Esophagus muscularis mucosa (tissue), 4 donors: ENCODE measurements at regions of chr21 and their contacts with region 1.

Region 1: DNA sequence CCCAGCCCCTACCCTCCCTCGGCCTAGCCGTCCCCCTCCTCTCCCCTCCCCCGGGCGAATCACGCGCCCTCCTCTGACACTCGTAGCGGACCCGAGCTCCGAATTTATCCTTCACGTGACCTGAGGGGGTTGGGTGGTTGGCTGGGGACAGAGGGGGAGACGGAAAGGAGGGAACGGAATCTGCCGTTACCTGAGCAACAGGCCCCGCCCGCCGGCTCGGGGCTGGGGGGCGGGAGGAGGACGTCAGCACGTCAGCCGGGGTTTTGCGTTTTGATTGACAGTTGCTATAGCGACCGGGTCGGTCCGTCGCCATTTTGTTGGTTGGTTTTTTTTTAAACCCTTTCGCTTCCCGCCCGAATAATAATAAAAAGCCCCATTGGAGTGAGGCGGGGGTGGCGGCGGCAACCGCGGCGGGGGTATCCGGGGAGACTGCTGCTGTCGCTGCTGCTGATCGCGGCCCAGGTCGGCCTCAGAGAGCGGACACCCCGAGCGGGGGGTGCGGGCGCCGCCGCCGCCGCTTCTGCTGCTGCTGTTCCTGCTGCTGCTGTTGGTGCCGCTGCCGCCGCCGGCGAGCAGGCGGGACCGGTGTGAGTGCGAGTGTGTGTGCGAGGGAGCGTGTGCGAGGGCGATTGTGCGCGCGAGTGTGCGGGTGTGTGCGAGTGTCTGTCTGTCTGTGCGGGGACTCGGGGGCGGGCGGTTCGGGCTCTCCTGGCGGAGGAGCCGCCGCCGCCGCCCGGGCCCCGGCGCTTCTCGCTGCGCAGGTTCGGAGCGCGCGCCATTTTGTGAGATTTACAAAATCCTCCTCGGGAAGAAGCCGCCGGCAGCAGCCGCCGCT is at the start of gene DYRK1A:
- DNase-seq: peak; percentile 100
- H3K4me3 ChIP-seq: peak within 1 kb of the TSS; percentile 79 to 97 (median 95)
- H3K27ac ChIP-seq: peak within 1 kb of the TSS; percentile 99 to 100 (median 100)
- H3K4me1 ChIP-seq: peaks cover 23 to 46% (median 44%) of the 10 kb centered on the region in 4 donors
- H3K27me3 ChIP-seq: no peaks in the 10 kb centered on the region
- CTCF ChIP-seq: no peak
- EP300 ChIP-seq: no peak
- POLR2A ChIP-seq: peak; percentile 64
- total RNA-seq, gene DYRK1A: 81.8 to 108 (median 87.4) TPM

Region 2: DNA sequence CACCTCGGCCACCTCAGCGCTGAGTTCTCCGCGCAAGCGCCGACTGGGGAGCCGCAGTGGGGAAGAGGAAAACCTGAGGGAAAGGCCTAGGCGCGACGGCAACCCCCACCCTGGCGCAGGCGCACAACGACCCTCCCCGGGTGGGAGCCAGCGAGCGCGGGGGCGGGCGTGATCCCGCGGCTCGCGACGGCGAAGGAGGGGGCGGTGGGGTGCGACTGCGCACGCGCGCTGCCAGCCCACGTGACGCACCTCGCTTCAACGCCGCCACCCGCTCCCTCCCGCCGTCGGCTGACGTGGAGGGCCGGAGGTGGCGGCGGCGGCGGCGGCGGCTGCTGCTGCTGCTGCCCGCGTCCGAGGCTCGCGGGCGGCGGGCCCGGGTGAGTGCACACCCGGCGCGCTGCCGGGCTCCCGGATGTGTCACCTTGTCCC is 293.7 kb before region 1 on chr21 and contains the starts of genes PIGP and TTC3:
- intact Hi-C with region 1: loop called (anchors 10 kb)
- DNase-seq: peak; percentile 96
- H3K4me3 ChIP-seq: peak within 1 kb of the TSS; percentile 75 to 97 (median 76)
- H3K27ac ChIP-seq: peak within 1 kb of the TSS; percentile 92 to 100 (median 100)
- H3K4me1 ChIP-seq: peaks cover 16 to 40% (median 32%) of the 10 kb centered on the region in 4 donors
- H3K27me3 ChIP-seq: no peaks in the 10 kb centered on the region
- CTCF ChIP-seq: peak in 1 of 3 experiments; percentile 3
- EP300 ChIP-seq: no peak
- POLR2A ChIP-seq: peak; percentile 50
- total RNA-seq, gene PIGP: 20.3 to 30.7 (median 21.6) TPM
- total RNA-seq, gene TTC3: 86.0 to 162 (median 104) TPM

Region 3: GRCh38 chr21:37267269-37268184 is 99.2 kb before region 1 on chr21 and contains the start of gene VPS26C:
- intact Hi-C with region 1: loop called (anchors 2 kb)
- DNase-seq: peak; percentile 99
- H3K4me3 ChIP-seq: peak within 1 kb of the TSS; percentile 69 to 99 (median 78)
- H3K27ac ChIP-seq: peak within 1 kb of the TSS; percentile 93 to 98 (median 96)
- H3K4me1 ChIP-seq: peaks cover 20 to 41% (median 39%) of the 10 kb centered on the region in 4 donors
- H3K27me3 ChIP-seq: no peaks in the 10 kb centered on the region
- CTCF ChIP-seq: peak in 1 of 3 experiments; percentile 15
- EP300 ChIP-seq: peak; percentile 25
- POLR2A ChIP-seq: peak; percentile 67
- total RNA-seq, gene VPS26C: 56.5 to 71.3 (median 59.7) TPM

Region 4: GRCh38 chr21:37319551-37319950 is 47.1 kb before region 1 on chr21:
- intact Hi-C with region 1: no loop called
- DNase-seq: no peak
- H3K4me3 ChIP-seq: no peak overlapping the region
- H3K27ac ChIP-seq: no peak overlapping the region
- H3K4me1 ChIP-seq: no peaks in the 10 kb centered on the region
- H3K27me3 ChIP-seq: no peaks in the 10 kb centered on the region
- CTCF ChIP-seq: no peak
- EP300 ChIP-seq: no peak
- POLR2A ChIP-seq: no peak

Region 5: GRCh38 chr21:37338671-37339551 is 27.8 kb before region 1 on chr21:
- intact Hi-C with region 1: loop called (anchors 2 kb)
- DNase-seq: no peak
- H3K4me3 ChIP-seq: peak overlapping the region in 1 of 4 donors; percentile 14
- H3K27ac ChIP-seq: peak overlapping the region; percentile 77 to 83 (median 82)
- H3K4me1 ChIP-seq: peaks cover 19 to 21% (median 19%) of the 10 kb centered on the region in 4 donors
- H3K27me3 ChIP-seq: no peaks in the 10 kb centered on the region
- CTCF ChIP-seq: no peak
- EP300 ChIP-seq: no peak
- POLR2A ChIP-seq: no peak

Region 6: DNA sequence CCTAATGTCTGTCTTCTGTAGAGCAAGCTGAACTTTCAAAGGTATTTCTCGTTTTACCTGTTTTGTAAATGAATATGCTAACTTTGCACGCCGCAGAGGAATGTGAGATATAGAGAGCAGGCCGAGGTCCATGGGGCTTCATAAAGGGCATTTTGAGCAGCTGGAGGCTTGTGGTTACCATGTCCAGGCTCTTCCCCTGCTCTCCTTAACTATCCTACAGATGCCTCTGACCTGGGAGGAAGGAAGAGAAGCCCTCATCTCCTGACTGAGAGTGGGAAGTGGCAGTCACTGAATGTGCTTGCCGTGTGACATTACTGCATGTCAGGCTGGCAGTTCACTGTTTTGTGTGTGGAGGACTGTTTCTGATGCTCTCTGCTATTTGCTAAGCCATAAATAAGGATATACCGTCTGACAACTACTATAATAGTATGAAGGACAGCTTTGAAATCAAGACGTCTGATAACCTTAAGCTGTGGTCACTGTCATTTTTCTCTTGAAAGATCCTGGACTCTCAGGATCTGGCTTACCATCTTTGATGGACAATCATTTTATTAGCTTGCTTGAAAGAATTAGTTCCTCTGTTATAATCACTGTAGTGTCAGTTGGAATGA is 92.1 kb after region 1 on chr21:
- intact Hi-C with region 1: loop called (anchors 5 kb)
- DNase-seq: no peak
- H3K4me3 ChIP-seq: no peak overlapping the region
- H3K27ac ChIP-seq: peak overlapping the region in 2 of 4 donors; percentile 3 to 18
- H3K4me1 ChIP-seq: peaks cover 95 to 99% (median 98%) of the 10 kb centered on the region in 4 donors
- H3K27me3 ChIP-seq: no peaks in the 10 kb centered on the region
- CTCF ChIP-seq: no peak
- EP300 ChIP-seq: no peak
- POLR2A ChIP-seq: no peak

Region 7: GRCh38 chr21:37658817-37659458 is 292.2 kb after region 1 on chr21:
- intact Hi-C with region 1: loop called (anchors 10 kb)
- DNase-seq: no peak
- H3K4me3 ChIP-seq: peak overlapping the region; percentile 4 to 26 (median 12)
- H3K27ac ChIP-seq: peak overlapping the region; percentile 78 to 89 (median 86)
- H3K4me1 ChIP-seq: peaks cover 25 to 38% (median 32%) of the 10 kb centered on the region in 4 donors
- H3K27me3 ChIP-seq: no peaks in the 10 kb centered on the region
- CTCF ChIP-seq: peak in 2 of 3 experiments; percentile 50
- EP300 ChIP-seq: peak; percentile 89
- POLR2A ChIP-seq: no peak